Activated naive CD4-positive, alpha-beta T cell treated with anti-CD3 and anti-CD28 coated beads, Interleukin-2, amount 10 ng/mL, durations not matched to agents 7 days and 5 days (primary cell): ENCODE measurements at regions of chr22 and their contacts with region 1.

Region 1: DNA sequence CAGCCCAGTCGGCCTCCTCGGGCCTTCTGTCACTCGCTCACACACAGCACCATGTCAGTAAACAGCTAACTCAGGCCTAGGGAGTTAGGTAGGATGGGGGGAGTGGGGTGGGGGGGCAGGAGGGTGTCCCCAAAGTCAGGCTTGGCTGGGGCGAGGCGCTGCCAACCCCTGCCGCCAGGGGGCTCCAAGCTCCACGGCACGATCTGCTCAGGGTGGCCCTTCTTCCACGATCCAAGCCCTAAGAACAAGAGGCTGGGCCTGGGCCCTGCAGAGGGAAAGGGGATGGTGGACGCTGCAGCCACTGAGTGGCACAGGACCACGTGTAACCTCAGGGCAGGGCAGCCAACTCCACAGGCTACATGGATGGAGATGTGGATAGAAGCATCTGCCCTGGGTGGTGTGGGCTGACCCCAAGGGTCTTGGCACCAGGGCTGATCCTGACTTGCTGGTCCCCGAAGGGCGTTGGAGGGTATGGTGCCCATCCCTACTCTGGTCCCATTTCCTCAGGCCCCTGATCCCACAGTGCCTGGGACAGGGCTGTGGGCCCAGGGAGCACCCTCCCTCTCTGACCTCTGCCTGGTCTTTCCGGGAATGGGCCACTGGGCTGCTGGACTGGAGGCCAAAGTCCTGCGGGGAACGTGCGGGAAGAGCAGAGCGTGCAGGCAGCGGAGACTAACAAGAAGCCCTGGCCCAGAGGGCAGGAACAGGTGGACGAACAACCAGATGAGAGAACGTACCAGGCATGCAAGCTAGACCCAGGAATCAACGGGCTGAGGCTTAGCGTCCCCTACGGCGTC is 29.1 kb upstream of the TXNRD2 start:
- DNase-seq: peak; percentile 85
- H3K4me3 Mint-ChIP-seq: no peak overlapping the region
- H3K27ac Mint-ChIP-seq: peak overlapping the region; percentile 37
- H3K4me1 Mint-ChIP-seq: peaks cover 15% of the 10 kb centered on the region
- H3K27me3 Mint-ChIP-seq: no peaks in the 10 kb centered on the region

Region 2: GRCh38 chr22:20013382-20013871 is 42.8 kb after region 1 on chr22:
- CTCF ChIA-PET with region 1: interaction called, 28 read pairs
- DNase-seq: peak; percentile 59
- H3K4me3 Mint-ChIP-seq: no peak overlapping the region
- H3K27ac Mint-ChIP-seq: no peak overlapping the region
- H3K4me1 Mint-ChIP-seq: peaks cover 11% of the 10 kb centered on the region
- H3K27me3 Mint-ChIP-seq: peaks cover 43% of the 10 kb centered on the region

Region 3: GRCh38 chr22:20130739-20131596 is 160.3 kb after region 1 on chr22:
- CTCF ChIA-PET with region 1: interaction called, 17 read pairs
- DNase-seq: peak; percentile 82
- H3K4me3 Mint-ChIP-seq: peak overlapping the region; percentile 65
- H3K27ac Mint-ChIP-seq: peak overlapping the region; percentile 60
- H3K4me1 Mint-ChIP-seq: peaks cover 24% of the 10 kb centered on the region
- H3K27me3 Mint-ChIP-seq: no peaks in the 10 kb centered on the region